ENCODE measurements at regions of chr3 and their contacts with region 1.

Region 1: GRCh38 chr3:185687271-185687878 is 101.3 kb downstream of the SENP2 start:
- DNase-seq: no peak
- H3K4me3 Mint-ChIP-seq: no peak overlapping the region
- H3K27ac Mint-ChIP-seq: peak overlapping the region; percentile 39
- H3K4me1 Mint-ChIP-seq: peaks cover 13% of the 10 kb centered on the region
- H3K27me3 Mint-ChIP-seq: no peaks in the 10 kb centered on the region
- CTCF ChIP-seq: no peak

Region 2: DNA sequence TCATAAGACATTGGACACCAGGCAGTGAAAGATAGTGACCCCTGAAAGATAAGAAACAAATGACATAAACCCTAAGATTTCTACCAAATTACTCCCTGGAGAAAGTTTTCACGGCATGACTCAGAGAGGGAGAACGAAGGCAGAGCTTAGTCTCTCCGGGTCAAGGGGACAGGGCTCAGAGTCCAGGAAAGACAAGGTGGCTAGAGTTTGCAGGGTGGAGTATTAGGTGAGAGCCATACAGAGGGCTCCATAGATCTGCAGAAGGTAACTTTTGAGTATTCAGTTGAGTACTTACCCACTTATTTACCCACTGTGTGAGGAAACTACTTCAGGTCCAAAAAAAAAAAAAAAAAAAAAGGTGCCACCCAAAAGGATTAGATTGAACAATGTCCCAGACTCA is 677.7 kb before region 1 on chr3:
- CTCF ChIA-PET with region 1: no interaction called
- POLR2A ChIA-PET with region 1: no interaction called
- intact Hi-C with region 1: no loop called
- DNase-seq: no peak
- H3K4me3 Mint-ChIP-seq: no peak overlapping the region
- H3K27ac Mint-ChIP-seq: no peak overlapping the region
- H3K4me1 Mint-ChIP-seq: no peaks in the 10 kb centered on the region
- H3K27me3 Mint-ChIP-seq: no peaks in the 10 kb centered on the region
- CTCF ChIP-seq: no peak

Region 3: GRCh38 chr3:185498503-185499396 is 188.6 kb before region 1 on chr3 and contains the start of gene TMEM41A:
- CTCF ChIA-PET with region 1: no interaction called
- POLR2A ChIA-PET with region 1: no interaction called
- intact Hi-C with region 1: no loop called
- DNase-seq: peak; percentile 88
- H3K4me3 Mint-ChIP-seq: peak within 1 kb of the TSS; percentile 96
- H3K27ac Mint-ChIP-seq: peak within 1 kb of the TSS; percentile 97
- H3K4me1 Mint-ChIP-seq: peaks cover 18% of the 10 kb centered on the region
- H3K27me3 Mint-ChIP-seq: no peaks in the 10 kb centered on the region
- CTCF ChIP-seq: no peak
- total RNA-seq, gene TMEM41A: 15.3 and 20.0 TPM in 2 replicates

Region 4: GRCh38 chr3:185717121-185717520 is 29.7 kb after region 1 on chr3:
- CTCF ChIA-PET with region 1: interaction called, 3 read pairs
- POLR2A ChIA-PET with region 1: interaction called, 15 read pairs
- intact Hi-C with region 1: no loop called
- DNase-seq: peak; percentile 74
- H3K4me3 Mint-ChIP-seq: peak overlapping the region; percentile 40
- H3K27ac Mint-ChIP-seq: peak overlapping the region; percentile 96
- H3K4me1 Mint-ChIP-seq: peaks cover 55% of the 10 kb centered on the region
- H3K27me3 Mint-ChIP-seq: no peaks in the 10 kb centered on the region
- CTCF ChIP-seq: no peak